Head of caudate nucleus (tissue), 42 donors: ENCODE measurements at regions of chr16 and their contacts with region 1.

Region 1: DNA sequence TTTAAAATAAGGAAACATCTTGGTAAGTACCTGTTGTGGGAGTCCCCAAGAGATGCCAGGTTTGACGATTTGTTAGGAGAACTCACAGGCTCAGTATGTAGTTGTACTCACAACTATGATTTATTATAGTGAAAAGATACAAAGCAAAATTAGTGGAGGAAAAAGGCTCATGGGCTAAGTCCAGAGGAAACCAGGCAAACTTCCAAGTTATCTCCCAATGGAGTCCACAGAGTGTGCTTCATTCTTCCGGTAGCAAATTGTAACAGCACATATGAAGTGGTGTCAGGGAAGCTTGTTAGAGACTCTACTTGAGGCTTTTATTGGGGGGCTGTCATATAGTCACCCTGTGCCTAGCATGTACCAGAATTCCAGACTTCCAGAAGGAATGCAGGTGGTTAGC is 2.3 kb downstream of the DDX19A start:
- DNase-seq: no peak

Region 2: GRCh38 chr16:70276392-70276791 is 72.6 kb before region 1 on chr16:
- intact Hi-C with region 1: no loop called
- DNase-seq: no peak

Region 3: GRCh38 chr16:70304892-70305448 is 44.0 kb before region 1 on chr16:
- intact Hi-C with region 1: loop called (anchors 5 kb)
- DNase-seq: no peak

Region 4: DNA sequence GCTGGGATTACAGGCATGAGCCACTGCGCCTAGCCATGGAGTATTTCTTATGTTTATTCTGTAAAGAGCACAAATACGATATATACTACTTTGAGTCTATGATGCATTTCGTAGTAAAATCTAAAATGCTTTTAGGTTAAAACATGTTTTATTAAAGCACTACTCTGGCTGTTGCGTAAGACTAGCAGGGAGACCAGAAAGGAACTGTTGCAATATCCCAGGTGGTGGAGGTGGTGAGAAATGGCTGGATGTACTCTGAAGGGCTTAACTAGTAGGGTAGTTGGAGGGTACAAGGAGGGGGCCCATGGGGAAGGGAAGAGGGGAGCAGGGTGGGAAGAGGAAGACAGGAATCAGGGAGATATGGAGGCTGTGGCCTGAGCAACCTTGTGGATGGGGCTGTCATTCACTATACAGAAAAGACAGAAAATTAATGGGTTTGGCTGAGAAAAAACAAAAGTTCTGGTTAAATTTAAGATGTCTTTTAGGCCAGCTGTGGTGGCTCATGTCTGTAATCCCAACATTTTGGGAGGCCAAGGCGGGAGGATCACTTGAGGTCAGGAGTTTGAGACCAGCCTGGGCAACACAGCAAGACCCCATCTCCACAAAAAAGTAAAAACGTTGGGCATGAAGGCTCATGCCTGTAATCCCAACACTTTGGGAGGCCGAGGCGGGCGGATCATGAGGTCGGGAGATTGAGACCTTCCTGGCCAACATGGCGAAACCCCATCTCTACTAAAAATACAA is 54.1 kb after region 1 on chr16:
- intact Hi-C with region 1: no loop called
- DNase-seq: peak in 1 of 42 donors; percentile 29